Breast epithelium (tissue), 4 donors: ENCODE measurements at regions of chr6 and their contacts with region 1.

Region 1: DNA sequence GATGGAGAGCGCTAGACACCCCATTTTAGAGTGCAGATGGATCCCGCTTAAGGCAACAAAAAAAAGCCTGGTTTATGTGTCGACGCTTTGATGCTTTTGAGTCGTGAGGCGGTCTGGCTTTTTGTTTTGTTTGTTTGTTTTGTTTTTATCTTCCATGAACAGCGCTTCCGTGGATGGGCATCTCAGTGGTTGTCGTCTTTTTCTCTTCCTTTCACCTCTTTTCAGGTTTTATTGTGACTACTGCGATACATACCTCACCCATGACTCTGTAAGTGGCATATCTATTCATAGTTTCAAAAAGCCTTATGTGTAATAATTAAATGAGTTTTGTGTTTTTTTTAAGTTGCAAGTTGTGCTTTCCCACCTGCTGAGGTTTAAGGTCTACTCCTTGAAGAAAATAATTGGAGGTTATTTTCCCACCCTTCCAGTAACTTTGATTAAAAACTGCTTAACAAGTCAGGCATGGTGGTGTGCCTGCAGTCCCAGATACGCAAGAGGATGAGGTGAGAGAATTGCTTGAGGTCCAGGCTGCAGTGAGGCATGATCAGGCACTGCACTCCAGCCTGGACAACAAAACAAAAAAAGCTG is 476 bp downstream of the SNRPC start:
- DNase-seq: no peak
- H3K4me3 ChIP-seq: peak overlapping the region; percentile 69 to 78 (median 76)
- H3K27ac ChIP-seq: peak overlapping the region; percentile 95 to 97
- H3K4me1 ChIP-seq: no peaks in the 10 kb centered on the region
- H3K27me3 ChIP-seq: no peaks in the 10 kb centered on the region
- CTCF ChIP-seq: no peak
- POLR2A ChIP-seq: no peak

Region 2: DNA sequence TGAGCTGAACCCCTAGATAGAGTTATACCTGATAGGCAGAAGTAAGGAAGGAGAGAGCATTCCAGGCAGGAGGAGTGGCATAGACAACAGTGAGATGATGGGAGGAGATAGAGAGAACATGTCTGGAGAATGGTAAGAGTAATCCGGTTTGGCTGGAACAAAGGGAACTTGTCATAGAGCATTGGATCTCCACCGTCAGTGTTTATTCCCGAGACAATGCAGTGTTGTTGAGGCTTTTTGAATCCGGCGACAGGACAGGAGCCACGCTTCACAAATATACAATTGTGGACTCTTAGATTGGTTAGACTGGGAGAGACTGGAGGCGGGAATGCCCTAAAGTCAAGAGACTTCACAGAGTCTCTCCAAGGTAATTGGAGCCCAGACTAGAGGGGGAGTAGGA is 251.1 kb after region 1 on chr6:
- intact Hi-C with region 1: loop called (anchors 5 kb)
- DNase-seq: no peak
- H3K4me3 ChIP-seq: no peak overlapping the region
- H3K27ac ChIP-seq: peak overlapping the region in 1 of 2 donors; percentile 21
- H3K4me1 ChIP-seq: no peaks in the 10 kb centered on the region
- H3K27me3 ChIP-seq: no peaks in the 10 kb centered on the region
- CTCF ChIP-seq: no peak
- POLR2A ChIP-seq: no peak